SK-N-SH (cell line): ENCODE measurements at regions of chr7 and their contacts with region 1.

Region 1: GRCh38 chr7:113159746-113160339 is 41.5 kb upstream of the SMIM30 start:
- DNase-seq: peak; percentile 63
- H3K4me3 ChIP-seq: no peak overlapping the region
- H3K27ac ChIP-seq: no peak overlapping the region
- H3K4me1 ChIP-seq: no peaks in the 10 kb centered on the region
- H3K27me3 ChIP-seq: no peaks in the 10 kb centered on the region
- CTCF ChIP-seq: peak; percentile 99
- EP300 ChIP-seq: no peak
- RAD21 ChIP-seq: peak; percentile 81

Region 2: DNA sequence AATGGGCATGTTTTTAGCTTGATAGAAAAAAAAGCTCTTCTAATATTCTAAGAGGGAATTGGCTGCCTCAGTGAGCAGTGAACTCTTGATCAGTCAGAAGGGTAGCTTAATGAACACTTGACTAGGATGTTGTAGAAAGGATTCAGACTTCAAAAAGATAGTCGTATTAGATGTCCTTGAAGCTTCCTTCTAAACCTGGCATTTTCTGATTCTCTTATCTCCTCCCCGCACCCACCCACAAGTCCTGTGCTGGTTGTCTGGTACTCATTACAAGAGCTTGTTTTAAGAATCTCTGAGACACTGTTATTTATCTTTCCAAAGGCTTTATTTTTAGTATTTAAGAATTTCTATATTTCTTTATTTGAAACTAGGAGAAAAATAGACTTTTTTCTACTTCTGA is 34.1 kb before region 1 on chr7:
- CTCF ChIA-PET with region 1: interaction called, 11 read pairs
- POLR2A ChIA-PET with region 1: no interaction called
- DNase-seq: no peak
- H3K4me3 ChIP-seq: no peak overlapping the region
- H3K27ac ChIP-seq: no peak overlapping the region
- H3K4me1 ChIP-seq: peaks cover 0 to 5% of the 10 kb centered on the region in 2 experiments; a peak in 2 of 4 replicates
- H3K27me3 ChIP-seq: no peaks in the 10 kb centered on the region
- CTCF ChIP-seq: no peak
- EP300 ChIP-seq: no peak
- RAD21 ChIP-seq: no peak

Region 3: GRCh38 chr7:113170370-113171222 is 10.8 kb after region 1 on chr7:
- CTCF ChIA-PET with region 1: interaction called, 42 read pairs
- POLR2A ChIA-PET with region 1: no interaction called
- DNase-seq: no peak
- H3K4me3 ChIP-seq: no peak overlapping the region
- H3K27ac ChIP-seq: no peak overlapping the region
- H3K4me1 ChIP-seq: no peaks in the 10 kb centered on the region
- H3K27me3 ChIP-seq: no peaks in the 10 kb centered on the region
- CTCF ChIP-seq: no peak
- EP300 ChIP-seq: no peak
- RAD21 ChIP-seq: no peak

Region 4: DNA sequence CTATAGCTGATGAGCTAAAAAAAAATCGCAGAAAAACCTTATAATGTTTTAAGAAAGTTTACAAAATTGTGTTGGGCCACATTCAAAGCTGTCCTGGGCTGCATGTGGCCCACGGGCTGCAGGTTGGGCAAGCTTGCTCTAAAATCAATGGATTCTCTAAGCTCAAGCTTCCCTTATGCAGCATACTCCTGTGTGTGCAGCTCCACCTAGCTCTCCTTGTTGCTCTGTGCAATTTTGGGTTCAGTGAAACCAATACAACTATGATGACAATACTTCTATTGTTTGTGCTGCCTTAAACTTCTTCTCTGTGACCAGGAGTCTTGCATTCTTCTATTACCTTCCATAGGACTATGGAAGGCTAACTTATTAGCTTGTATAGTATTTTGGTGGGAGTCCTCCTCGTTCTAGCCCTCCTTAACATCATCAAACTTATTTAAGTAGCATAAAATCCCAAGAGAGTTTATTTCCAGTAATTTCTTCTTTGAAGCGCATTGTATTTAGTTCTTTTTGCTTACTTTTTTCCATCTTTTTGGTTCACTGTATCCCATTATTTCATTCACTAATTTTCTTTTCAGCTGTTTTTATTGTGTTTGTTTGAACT is 129.4 kb after region 1 on chr7:
- CTCF ChIA-PET with region 1: interaction called, 15 read pairs
- POLR2A ChIA-PET with region 1: no interaction called
- DNase-seq: peak; percentile 42
- H3K4me3 ChIP-seq: no peak overlapping the region
- H3K27ac ChIP-seq: no peak overlapping the region
- H3K4me1 ChIP-seq: no peaks in the 10 kb centered on the region
- H3K27me3 ChIP-seq: no peaks in the 10 kb centered on the region
- CTCF ChIP-seq: peak; percentile 84
- EP300 ChIP-seq: no peak
- RAD21 ChIP-seq: peak; percentile 90

Region 5: GRCh38 chr7:113446791-113447190 is 286.9 kb after region 1 on chr7:
- CTCF ChIA-PET with region 1: no interaction called
- POLR2A ChIA-PET with region 1: no interaction called
- DNase-seq: no peak
- H3K4me3 ChIP-seq: no peak overlapping the region
- H3K27ac ChIP-seq: no peak overlapping the region
- H3K4me1 ChIP-seq: no peaks in the 10 kb centered on the region
- H3K27me3 ChIP-seq: no peaks in the 10 kb centered on the region
- CTCF ChIP-seq: no peak
- EP300 ChIP-seq: no peak
- RAD21 ChIP-seq: no peak